ENCODE measurements at regions of chr11 and their contacts with region 1.

Region 1: GRCh38 chr11:96342961-96343711 is at the start of gene MAML2:
- DNase-seq: peak; percentile 93
- H3K4me3 Mint-ChIP-seq: peak within 1 kb of the TSS; percentile 94
- H3K27ac Mint-ChIP-seq: peak within 1 kb of the TSS; percentile 91
- H3K4me1 Mint-ChIP-seq: peaks cover 30% of the 10 kb centered on the region
- H3K27me3 Mint-ChIP-seq: no peaks in the 10 kb centered on the region

Region 2: GRCh38 chr11:95849087-95849825 is 493.9 kb before region 1 on chr11:
- CTCF ChIA-PET with region 1: interaction called, 27 read pairs
- DNase-seq: peak; percentile 43
- H3K4me3 Mint-ChIP-seq: no peak overlapping the region
- H3K27ac Mint-ChIP-seq: no peak overlapping the region
- H3K4me1 Mint-ChIP-seq: no peaks in the 10 kb centered on the region
- H3K27me3 Mint-ChIP-seq: no peaks in the 10 kb centered on the region

Region 3: GRCh38 chr11:96075532-96075959 is 267.6 kb before region 1 on chr11:
- CTCF ChIA-PET with region 1: interaction called, 12 read pairs
- DNase-seq: no peak
- H3K4me3 Mint-ChIP-seq: no peak overlapping the region
- H3K27ac Mint-ChIP-seq: peak overlapping the region; percentile 24
- H3K4me1 Mint-ChIP-seq: peaks cover 34% of the 10 kb centered on the region
- H3K27me3 Mint-ChIP-seq: no peaks in the 10 kb centered on the region

Region 4: GRCh38 chr11:96215110-96215782 is 127.9 kb before region 1 on chr11:
- CTCF ChIA-PET with region 1: interaction called, 18 read pairs
- DNase-seq: peak; percentile 60
- H3K4me3 Mint-ChIP-seq: peak overlapping the region; percentile 37
- H3K27ac Mint-ChIP-seq: peak overlapping the region; percentile 95
- H3K4me1 Mint-ChIP-seq: peaks cover 80% of the 10 kb centered on the region
- H3K27me3 Mint-ChIP-seq: no peaks in the 10 kb centered on the region

Region 5: DNA sequence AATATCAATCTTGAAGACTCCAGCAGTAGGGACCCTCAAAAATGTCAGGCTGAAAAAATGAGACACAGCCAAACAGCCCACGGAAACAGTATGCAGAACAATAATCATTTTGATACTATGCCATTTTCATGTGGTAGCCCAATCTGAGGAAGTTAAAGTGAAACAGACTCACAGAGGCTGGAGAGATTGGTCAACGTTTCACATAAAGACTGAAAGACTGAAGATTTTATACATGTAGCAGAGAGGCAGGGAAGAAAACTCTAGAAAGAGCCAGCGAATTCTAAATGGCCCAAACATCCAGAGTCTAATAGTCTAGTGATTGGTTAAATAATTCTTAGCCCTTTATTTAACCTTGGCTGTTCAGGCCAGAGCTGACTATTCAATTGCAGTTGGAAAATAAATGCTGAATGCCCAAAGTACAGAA is 49.5 kb before region 1 on chr11:
- CTCF ChIA-PET with region 1: interaction called, 14 read pairs
- DNase-seq: no peak
- H3K4me3 Mint-ChIP-seq: no peak overlapping the region
- H3K27ac Mint-ChIP-seq: peak overlapping the region; percentile 39
- H3K4me1 Mint-ChIP-seq: peaks cover 53% of the 10 kb centered on the region
- H3K27me3 Mint-ChIP-seq: no peaks in the 10 kb centered on the region